Activated CD4-positive, alpha-beta T cell treated with anti-CD3 and anti-CD28 coated beads, Interleukin-2, amount 10 ng/mL, durations not matched to agents 7 days and 5 days (primary cell): ENCODE measurements at regions of chr16 and their contacts with region 1.

Region 1: GRCh38 chr16:67660564-67661028 is at the start of gene PARD6A:
- DNase-seq: peak; percentile 98
- H3K4me3 Mint-ChIP-seq: peak within 1 kb of the TSS; percentile 87
- H3K27ac Mint-ChIP-seq: peak within 1 kb of the TSS; percentile 97
- H3K4me1 Mint-ChIP-seq: peaks cover 36% of the 10 kb centered on the region
- H3K27me3 Mint-ChIP-seq: no peaks in the 10 kb centered on the region
- total RNA-seq, gene PARD6A: 11.6 to 13.0 TPM

Region 2: GRCh38 chr16:67530013-67530939 is 130.3 kb before region 1 on chr16:
- CTCF ChIA-PET with region 1: interaction called, 10 read pairs
- POLR2A ChIA-PET with region 1: no interaction called
- DNase-seq: peak; percentile 23
- H3K4me3 Mint-ChIP-seq: peak overlapping the region; percentile 64
- H3K27ac Mint-ChIP-seq: no peak overlapping the region
- H3K4me1 Mint-ChIP-seq: peaks cover 24% of the 10 kb centered on the region
- H3K27me3 Mint-ChIP-seq: peaks cover 59% of the 10 kb centered on the region

Region 3: DNA sequence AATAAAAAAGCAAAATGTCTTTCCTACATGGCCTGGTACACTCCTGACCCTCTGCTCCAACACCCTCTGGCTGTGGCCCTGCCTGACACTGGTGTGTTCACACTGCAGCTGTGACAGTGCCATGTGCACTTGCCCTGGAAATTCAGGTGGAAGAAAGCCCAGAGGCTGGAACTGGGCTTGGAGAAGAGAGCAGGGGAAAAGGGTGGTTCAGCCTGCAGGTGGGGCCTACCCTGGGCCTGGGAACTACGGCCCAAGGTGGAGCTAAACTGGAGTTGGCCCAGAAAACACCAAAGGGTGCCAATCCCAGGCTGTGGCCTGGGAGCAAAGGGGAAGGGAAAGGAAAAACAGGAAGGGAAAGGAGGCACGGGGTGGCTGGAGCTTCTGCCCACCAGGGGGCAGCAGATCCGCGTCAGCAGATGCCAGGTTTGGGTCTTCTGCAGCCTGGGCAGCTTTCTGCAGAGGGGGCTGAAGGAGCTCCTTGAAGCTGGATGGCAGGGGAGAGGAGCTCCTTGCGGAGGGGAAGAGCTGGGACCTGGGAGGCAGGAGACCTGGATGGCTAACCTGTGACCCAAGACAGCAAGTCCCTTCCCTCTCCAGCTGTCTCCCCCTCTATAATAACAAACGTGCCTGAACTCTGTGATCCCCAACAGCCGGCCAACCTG is 113.7 kb before region 1 on chr16:
- CTCF ChIA-PET with region 1: interaction called, 29 read pairs
- POLR2A ChIA-PET with region 1: interaction called, 3 read pairs
- DNase-seq: peak; percentile 78
- H3K4me3 Mint-ChIP-seq: peak overlapping the region; percentile 55
- H3K27ac Mint-ChIP-seq: peak overlapping the region; percentile 97
- H3K4me1 Mint-ChIP-seq: peaks cover 66% of the 10 kb centered on the region
- H3K27me3 Mint-ChIP-seq: no peaks in the 10 kb centered on the region

Region 4: GRCh38 chr16:67561824-67562525 is 98.6 kb before region 1 on chr16:
- CTCF ChIA-PET with region 1: interaction called, 22 read pairs
- POLR2A ChIA-PET with region 1: interaction called, 3 read pairs
- DNase-seq: peak; percentile 99
- H3K4me3 Mint-ChIP-seq: peak overlapping the region; percentile 87
- H3K27ac Mint-ChIP-seq: peak overlapping the region; percentile 97
- H3K4me1 Mint-ChIP-seq: peaks cover 47% of the 10 kb centered on the region
- H3K27me3 Mint-ChIP-seq: no peaks in the 10 kb centered on the region

Region 5: DNA sequence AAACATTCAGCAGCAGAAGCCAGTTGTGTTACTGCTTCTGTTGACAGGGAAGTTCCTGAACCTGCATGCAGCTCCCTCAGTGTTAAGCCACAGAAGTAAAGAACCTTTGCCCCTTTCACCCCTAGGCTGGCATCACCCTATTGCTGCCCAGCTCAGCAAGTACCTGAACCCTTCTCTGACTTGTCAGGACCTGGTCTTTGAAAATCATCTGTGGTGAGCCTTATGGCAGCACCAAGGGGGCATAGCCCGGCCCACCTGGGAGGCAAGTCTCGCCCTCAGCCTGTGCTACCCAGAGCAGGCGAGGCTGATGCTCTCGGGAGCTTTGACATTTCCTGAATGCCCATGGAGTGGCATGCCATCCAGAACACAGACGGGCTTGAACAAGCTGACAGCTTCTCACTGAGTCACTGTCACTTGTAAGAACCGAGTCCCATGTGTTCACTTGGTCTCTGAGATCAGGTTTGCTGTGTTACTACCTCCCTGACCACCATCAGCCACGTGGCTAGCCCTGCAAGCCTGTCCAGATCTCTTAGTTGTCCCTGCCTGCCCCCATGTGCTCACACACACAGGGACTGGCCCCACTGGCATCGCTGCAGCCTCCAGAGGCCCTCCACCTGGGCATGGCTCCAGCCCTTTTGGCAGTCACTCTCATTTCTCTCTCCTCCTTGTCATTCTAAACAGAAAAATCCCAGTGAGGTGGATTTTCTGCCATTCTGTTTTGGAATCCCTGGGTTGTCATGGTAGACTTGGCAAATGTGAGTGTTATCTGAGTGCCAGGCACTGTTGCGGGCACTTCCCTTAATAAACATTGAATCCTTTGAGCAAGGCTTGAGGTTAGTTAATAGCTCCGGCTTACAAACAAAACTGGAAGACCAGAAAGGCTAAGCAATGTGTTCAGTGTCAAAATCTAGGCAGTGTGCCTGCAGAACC is 18.6 kb before region 1 on chr16:
- CTCF ChIA-PET with region 1: interaction called, 41 read pairs
- POLR2A ChIA-PET with region 1: interaction called, 4 read pairs
- DNase-seq: no peak
- H3K4me3 Mint-ChIP-seq: no peak overlapping the region
- H3K27ac Mint-ChIP-seq: no peak overlapping the region
- H3K4me1 Mint-ChIP-seq: peaks cover 16% of the 10 kb centered on the region
- H3K27me3 Mint-ChIP-seq: no peaks in the 10 kb centered on the region

Region 6: GRCh38 chr16:67649494-67649931 is 11.1 kb before region 1 on chr16:
- CTCF ChIA-PET with region 1: interaction called, 41 read pairs
- POLR2A ChIA-PET with region 1: interaction called, 4 read pairs
- DNase-seq: no peak
- H3K4me3 Mint-ChIP-seq: no peak overlapping the region
- H3K27ac Mint-ChIP-seq: no peak overlapping the region
- H3K4me1 Mint-ChIP-seq: peaks cover 21% of the 10 kb centered on the region
- H3K27me3 Mint-ChIP-seq: no peaks in the 10 kb centered on the region

Region 7: DNA sequence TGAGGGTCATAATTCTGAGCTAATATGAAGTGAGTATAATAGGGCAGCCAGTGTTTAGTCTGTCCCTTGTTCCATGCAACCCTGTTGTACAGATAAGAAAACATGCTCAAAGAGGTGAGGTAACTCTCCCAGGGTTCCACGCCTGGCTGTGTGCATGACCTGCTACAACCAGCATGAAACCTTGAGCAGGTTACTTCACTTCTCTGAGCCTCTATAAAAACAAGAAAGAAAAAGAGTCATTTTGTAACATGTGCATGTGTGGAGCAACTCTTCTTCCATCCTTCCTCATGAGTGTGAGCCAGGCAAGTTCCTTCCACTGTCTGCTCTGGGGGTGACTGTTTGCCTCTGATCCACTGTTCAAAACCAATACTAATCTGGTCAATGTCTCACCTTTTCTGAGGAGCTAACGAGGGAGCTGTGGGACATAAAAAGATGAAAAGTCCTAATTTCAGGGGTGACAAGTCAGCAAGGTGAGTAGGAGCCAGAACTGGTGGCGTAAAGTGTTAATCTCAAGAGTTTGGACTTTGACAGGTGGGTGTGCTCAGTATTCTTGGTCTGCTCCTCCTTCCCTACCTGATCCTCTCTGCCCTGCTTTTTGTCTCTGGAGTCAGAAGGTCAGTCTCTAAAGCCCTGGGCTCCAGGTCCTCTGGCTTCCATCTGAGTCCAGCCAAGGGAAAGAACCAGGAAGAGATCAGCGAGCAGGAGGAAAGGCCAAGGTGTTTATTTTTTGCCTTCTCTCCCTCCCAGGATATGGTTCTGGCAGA is 37.0 kb after region 1 on chr16:
- CTCF ChIA-PET with region 1: no interaction called
- POLR2A ChIA-PET with region 1: no interaction called
- DNase-seq: no peak
- H3K4me3 Mint-ChIP-seq: no peak overlapping the region
- H3K27ac Mint-ChIP-seq: no peak overlapping the region
- H3K4me1 Mint-ChIP-seq: peaks cover 4% of the 10 kb centered on the region
- H3K27me3 Mint-ChIP-seq: no peaks in the 10 kb centered on the region